Heart left ventricle (tissue), 16 donors: ENCODE measurements at regions of chr2 and their contacts with region 1.

Region 1: DNA sequence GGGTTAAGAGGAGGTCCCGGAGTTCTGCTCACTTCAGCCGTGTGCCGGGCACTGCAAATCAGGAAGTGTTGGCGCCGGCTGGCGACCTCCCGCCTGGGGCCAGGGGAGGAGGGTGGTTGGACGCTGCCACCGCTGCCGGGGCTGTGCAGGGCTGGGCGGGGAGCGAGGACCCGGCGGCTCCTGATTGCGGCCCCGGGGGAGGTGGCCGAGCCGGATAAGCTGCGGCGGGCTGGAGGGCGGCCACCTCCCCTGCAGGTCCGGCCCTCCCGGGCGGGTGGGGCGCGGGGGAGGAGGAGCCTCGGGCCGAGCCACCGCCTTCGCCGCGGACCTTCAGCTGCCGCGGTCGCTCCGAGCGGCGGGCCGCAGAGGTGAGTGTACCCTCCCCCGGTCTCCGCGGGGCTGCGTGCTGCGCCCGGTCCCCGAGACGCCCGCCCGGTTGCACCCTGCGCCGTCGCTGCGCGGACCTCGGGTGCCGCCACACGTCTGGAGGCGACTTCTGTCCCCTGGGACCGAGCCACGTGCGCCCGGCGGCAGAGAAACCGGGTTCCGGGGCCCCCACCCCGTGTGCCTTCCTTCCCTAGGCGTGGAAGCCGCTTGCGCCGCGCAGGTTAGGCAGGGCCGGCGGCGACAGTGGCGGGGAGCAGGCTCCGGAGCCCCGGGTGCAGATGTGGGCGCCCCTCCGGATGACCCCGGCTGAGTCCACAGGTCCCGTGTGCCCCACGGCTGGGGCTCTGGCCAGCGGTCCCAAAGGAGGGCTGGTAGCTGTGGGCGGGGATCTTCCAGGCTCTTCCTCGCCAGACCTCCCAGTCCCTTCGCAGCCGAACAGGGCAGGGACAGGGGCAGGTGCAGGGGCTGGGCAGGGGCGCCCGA is at the start of gene STEAP3:
- DNase-seq: peak; percentile 80 to 90 (median 88)
- ATAC-seq: peak; percentile 75 to 96 (median 94)
- H3K4me3 ChIP-seq: peak within 1 kb of the TSS; percentile 50 to 81 (median 70)
- H3K27ac ChIP-seq: peak within 1 kb of the TSS in 8 of 12 donors; percentile 24 to 70 (median 52)
- H3K4me1 ChIP-seq: peaks cover 0 to 26% (median 12%) of the 10 kb centered on the region in 12 donors
- H3K27me3 ChIP-seq: peaks cover 0 to 5% (median 0%) of the 10 kb centered on the region in 9 donors
- CTCF ChIP-seq: peak in 1 of 12 donors; percentile 12
- POLR2A ChIP-seq: peak in 1 of 2 donors; percentile 57
- total RNA-seq, gene STEAP3: 6.9 to 38.5 (median 12.2) TPM

Region 2: DNA sequence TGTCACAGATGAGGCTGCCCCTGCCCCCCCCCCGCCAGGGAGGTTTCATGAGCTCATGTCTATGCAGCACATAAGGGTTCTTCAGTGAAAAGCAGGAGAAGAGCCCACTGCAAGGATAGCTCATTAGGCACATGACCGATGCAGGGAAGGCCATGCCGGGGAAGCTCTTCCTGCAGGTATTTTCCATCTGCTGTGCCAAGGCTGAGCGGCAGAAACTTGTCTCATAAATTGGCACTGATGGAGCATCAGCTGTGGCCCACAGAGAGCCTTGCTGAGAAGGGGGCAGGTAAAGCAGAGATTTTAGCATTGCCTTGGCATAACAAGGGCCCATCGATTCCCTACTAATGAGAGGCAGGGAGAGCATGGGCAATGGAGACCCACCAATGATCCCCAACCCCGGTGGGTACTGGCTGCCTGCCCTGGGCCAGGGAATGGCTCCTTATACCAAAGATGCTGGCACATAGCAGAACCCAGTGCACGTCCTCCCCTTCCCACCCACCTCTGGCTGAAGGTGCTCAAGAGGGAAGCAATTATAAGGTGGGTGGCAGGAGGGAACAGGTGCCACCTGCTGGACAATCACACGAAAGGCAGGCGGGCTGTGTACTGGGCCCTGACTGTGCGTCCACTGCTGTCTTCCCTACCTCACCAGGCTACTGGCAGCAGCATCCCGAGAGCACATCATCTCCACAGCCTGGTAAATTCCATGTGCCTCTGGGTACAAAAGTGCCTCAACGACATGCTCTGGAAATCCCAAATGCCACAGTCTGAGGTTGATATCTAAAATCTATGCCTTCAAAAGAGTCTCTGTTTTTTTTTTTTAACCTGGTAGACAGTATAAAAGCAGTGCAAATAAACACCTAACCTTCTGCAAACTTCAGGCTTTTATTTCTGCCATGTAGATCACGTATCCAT is 41.3 kb after region 1 on chr2:
- intact Hi-C with region 1: loop called in 1 of 10 experiments (anchors 5 kb)
- DNase-seq: peak in 2 of 5 donors; percentile 33 to 37
- ATAC-seq: peak; percentile 42 to 87 (median 82)
- H3K4me3 ChIP-seq: no peak overlapping the region
- H3K27ac ChIP-seq: no peak overlapping the region
- H3K4me1 ChIP-seq: peaks cover 0 to 17% (median 0%) of the 10 kb centered on the region in 12 donors
- H3K27me3 ChIP-seq: no peaks in the 10 kb centered on the region
- CTCF ChIP-seq: peak; percentile 52 to 82 (median 70)
- POLR2A ChIP-seq: no peak

Region 3: DNA sequence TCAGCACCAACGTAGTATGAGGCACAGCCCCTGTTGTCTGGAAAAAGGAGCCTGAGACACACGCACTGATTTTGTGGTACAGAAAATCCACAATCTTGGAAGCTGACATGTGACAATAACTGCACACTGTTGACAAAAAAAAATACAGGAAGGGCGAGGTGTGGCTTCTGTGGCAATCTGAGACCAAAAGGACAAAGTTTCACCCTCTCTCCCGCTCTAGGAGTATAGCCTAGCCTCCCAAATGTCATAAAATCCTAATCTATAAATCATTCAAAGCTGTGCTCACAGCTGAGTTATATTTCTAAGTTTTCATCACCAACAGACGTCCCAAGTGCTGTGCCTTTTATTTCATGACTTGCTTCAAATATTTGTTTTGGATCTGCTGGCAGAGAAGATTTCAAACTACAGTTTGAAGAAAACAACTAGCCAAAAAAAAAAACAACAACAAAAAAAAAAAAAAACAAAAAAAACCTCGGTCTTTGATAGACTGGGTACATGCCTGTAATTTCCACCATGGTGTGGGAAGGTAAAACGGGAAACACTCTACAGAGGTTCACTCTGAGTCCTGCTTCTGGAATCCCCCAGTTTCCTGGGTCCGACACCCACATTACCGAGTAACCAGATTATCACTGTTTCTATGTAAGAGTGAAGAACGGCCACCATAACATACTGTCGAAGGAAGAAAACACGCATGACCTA is 81.9 kb after region 1 on chr2:
- intact Hi-C with region 1: loop called in 1 of 10 experiments (anchors 5 kb)
- DNase-seq: no peak
- ATAC-seq: peak in 3 of 4 donors; percentile 44 to 53 (median 47)
- H3K4me3 ChIP-seq: peak overlapping the region in 8 of 12 donors; percentile 12 to 48 (median 33)
- H3K27ac ChIP-seq: peak overlapping the region; percentile 37 to 85 (median 72)
- H3K4me1 ChIP-seq: peaks cover 0 to 24% (median 6%) of the 10 kb centered on the region in 12 donors
- H3K27me3 ChIP-seq: no peaks in the 10 kb centered on the region
- CTCF ChIP-seq: no peak
- POLR2A ChIP-seq: no peak